Gastrocnemius medialis (tissue), 4 donors: ENCODE measurements at regions of chrX and their contacts with region 1.

Region 1: DNA sequence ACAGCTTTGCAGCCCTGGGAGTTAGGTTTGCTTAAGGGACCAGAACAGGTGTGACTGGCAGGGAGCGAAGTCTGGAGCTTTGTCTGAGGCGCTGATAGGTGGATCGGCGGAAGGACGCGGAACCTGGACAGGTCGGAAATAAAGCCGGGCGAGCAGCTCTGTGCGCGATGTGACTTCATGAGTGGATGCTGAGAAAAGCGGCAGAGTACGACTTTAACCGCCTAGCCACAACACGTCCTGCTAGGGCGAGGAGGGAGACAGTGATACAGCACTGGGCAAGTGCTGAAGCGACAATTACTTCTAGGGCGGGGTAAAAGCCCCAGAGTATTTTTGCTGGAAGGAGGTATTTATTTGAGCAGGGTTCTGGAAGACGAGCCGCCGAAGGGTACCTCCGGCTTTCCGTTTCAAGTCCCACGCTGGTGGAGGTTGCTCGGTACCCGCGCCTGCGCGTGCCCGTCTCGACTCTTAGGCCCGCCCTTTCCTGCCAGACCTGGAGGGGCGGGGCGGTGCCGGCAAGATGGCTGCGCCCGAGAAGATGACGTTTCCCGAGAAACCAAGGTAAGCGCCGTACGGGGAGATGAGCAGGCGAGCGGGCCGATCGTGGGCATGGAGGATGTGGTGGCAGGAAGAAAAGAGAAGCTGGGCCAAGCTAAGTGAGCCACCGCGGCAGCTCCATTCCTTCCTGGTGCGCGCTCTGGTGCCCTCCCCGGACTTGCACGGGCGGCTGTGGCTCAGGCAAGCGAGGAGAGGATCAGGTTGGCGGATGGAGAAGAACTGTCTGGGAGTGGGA is at the start of gene ZRSR2:
- DNase-seq: peak; percentile 52 to 72
- ATAC-seq: peak; percentile 89 to 95
- H3K4me3 ChIP-seq: peak within 1 kb of the TSS; percentile 71 to 78 (median 76)
- H3K27ac ChIP-seq: peak within 1 kb of the TSS; percentile 73 to 86 (median 82)
- H3K4me1 ChIP-seq: peaks cover 7 to 10% of the 10 kb centered on the region in 2 donors
- H3K27me3 ChIP-seq: no peaks in the 10 kb centered on the region
- CTCF ChIP-seq: no peak
- POLR2A ChIP-seq: peak; percentile 41 to 54
- total RNA-seq, gene ZRSR2: 3.9 to 8.4 (median 6.9) TPM

Region 2: GRCh38 chrX:15598036-15598435 is 192.1 kb before region 1 on chrX:
- in situ Hi-C with region 1: no loop called
- intact Hi-C with region 1: no loop called
- DNase-seq: no peak
- ATAC-seq: no peak
- H3K4me3 ChIP-seq: no peak overlapping the region
- H3K27ac ChIP-seq: no peak overlapping the region
- H3K4me1 ChIP-seq: no peaks in the 10 kb centered on the region
- H3K27me3 ChIP-seq: peaks cover 0 to 3% (median 0%) of the 10 kb centered on the region in 3 donors
- CTCF ChIP-seq: no peak
- POLR2A ChIP-seq: no peak

Region 3: GRCh38 chrX:15686818-15687685 is 103.1 kb before region 1 on chrX:
- in situ Hi-C with region 1: no loop called
- intact Hi-C with region 1: loop called (anchors 5 kb)
- DNase-seq: peak; percentile 24 to 35
- ATAC-seq: peak; percentile 73 to 87
- H3K4me3 ChIP-seq: no peak overlapping the region
- H3K27ac ChIP-seq: no peak overlapping the region
- H3K4me1 ChIP-seq: peaks cover 0 to 3% of the 10 kb centered on the region in 2 donors
- H3K27me3 ChIP-seq: no peaks in the 10 kb centered on the region
- CTCF ChIP-seq: peak; percentile 32 to 78 (median 65)
- POLR2A ChIP-seq: no peak